ENCODE measurements at regions of chr1 and their contacts with region 1.

Region 1: GRCh38 chr1:84090447-84091245 is 53.4 kb upstream of the PRKACB start:
- DNase-seq: peak in 4 of 14 experiments; percentile 10 to 71 (median 44)
- ATAC-seq: peak; percentile 70
- H3K4me3 ChIP-seq: peak overlapping the region; percentile 30
- H3K4me3 Mint-ChIP-seq: peak overlapping the region; percentile 72
- H3K27ac ChIP-seq: peak overlapping the region in 1 of 2 donors; percentile 19
- H3K27ac Mint-ChIP-seq: peak overlapping the region; percentile 82
- H3K4me1 ChIP-seq: peaks cover 5% of the 10 kb centered on the region
- H3K4me1 Mint-ChIP-seq: peaks cover 27% of the 10 kb centered on the region
- H3K27me3 ChIP-seq: no peaks in the 10 kb centered on the region
- H3K27me3 Mint-ChIP-seq: no peaks in the 10 kb centered on the region
- CTCF ChIP-seq: no peak

Region 2: GRCh38 chr1:83692524-83693381 is 397.9 kb before region 1 on chr1:
- CTCF ChIA-PET with region 1: no interaction called
- POLR2A ChIA-PET with region 1: no interaction called
- intact Hi-C with region 1: no loop called
- DNase-seq: peak in 6 of 14 experiments; percentile 7 to 38 (median 18)
- ATAC-seq: peak; percentile 66
- H3K4me3 ChIP-seq: peak overlapping the region; percentile 44
- H3K4me3 Mint-ChIP-seq: peak overlapping the region; percentile 93
- H3K27ac ChIP-seq: no peak overlapping the region
- H3K27ac Mint-ChIP-seq: peak overlapping the region; percentile 19
- H3K4me1 ChIP-seq: peaks cover 8% of the 10 kb centered on the region
- H3K4me1 Mint-ChIP-seq: peaks cover 20% of the 10 kb centered on the region
- H3K27me3 ChIP-seq: no peaks in the 10 kb centered on the region
- H3K27me3 Mint-ChIP-seq: no peaks in the 10 kb centered on the region
- CTCF ChIP-seq: no peak

Region 3: GRCh38 chr1:84077476-84078107 is 13.1 kb before region 1 on chr1:
- CTCF ChIA-PET with region 1: interaction called, 3 read pairs
- POLR2A ChIA-PET with region 1: interaction called, 13 read pairs
- intact Hi-C with region 1: no loop called
- DNase-seq: peak; percentile 32 to 86 (median 60)
- ATAC-seq: peak; percentile 88
- H3K4me3 ChIP-seq: peak overlapping the region; percentile 74
- H3K4me3 Mint-ChIP-seq: peak overlapping the region; percentile 92
- H3K27ac ChIP-seq: no peak overlapping the region
- H3K27ac Mint-ChIP-seq: peak overlapping the region; percentile 63
- H3K4me1 ChIP-seq: peaks cover 11% of the 10 kb centered on the region
- H3K4me1 Mint-ChIP-seq: peaks cover 16% of the 10 kb centered on the region
- H3K27me3 ChIP-seq: no peaks in the 10 kb centered on the region
- H3K27me3 Mint-ChIP-seq: no peaks in the 10 kb centered on the region
- CTCF ChIP-seq: no peak

Measured in CD4-positive, alpha-beta T cell (primary cell).